Calu3 (cell line): ENCODE measurements at regions of chr3 and their contacts with region 1.

Region 1: GRCh38 chr3:124636101-124636862 is 94.0 kb upstream of the UMPS start:
- DNase-seq: no peak
- H3K4me3 Mint-ChIP-seq: no peak overlapping the region
- H3K27ac Mint-ChIP-seq: no peak overlapping the region
- H3K4me1 Mint-ChIP-seq: peaks cover 53% of the 10 kb centered on the region
- H3K27me3 Mint-ChIP-seq: no peaks in the 10 kb centered on the region
- CTCF ChIP-seq: no peak

Region 2: DNA sequence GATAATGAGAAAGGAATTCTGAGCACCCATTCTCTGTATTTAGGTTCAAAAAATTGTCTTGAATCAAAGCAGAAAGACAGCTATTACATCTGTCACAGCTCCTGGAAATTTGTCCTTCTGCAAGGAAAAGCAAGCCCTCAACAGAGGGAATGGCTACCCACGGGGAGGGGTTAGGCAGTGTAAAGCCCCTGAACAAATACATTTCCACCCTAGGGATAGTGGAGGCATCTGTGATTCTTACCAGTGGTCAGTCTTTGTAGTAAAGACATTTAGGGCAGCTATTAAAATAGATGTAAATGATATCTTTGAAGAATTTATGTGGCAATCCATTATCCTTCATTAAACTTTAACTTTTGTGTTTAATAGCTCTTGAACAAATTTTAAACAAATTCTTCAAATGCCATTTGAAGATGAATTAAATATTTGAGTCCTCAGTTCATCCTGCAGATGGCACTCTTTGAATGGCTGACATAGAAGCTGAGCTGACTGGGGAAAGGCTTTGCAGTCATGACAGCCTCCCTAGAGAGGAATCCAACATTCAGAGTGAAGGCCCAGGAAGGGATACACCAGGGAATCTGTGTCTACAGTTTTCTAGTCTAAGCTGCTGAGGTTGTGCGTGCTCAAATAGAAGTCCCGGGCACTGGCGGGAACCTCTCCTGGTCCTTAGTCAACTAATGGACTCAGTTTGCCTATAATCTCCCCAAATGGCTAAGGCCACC is 284.7 kb before region 1 on chr3:
- CTCF ChIA-PET with region 1: no interaction called
- intact Hi-C with region 1: no loop called
- DNase-seq: peak; percentile 22
- H3K4me3 Mint-ChIP-seq: no peak overlapping the region
- H3K27ac Mint-ChIP-seq: no peak overlapping the region
- H3K4me1 Mint-ChIP-seq: no peaks in the 10 kb centered on the region
- H3K27me3 Mint-ChIP-seq: peaks cover 66% of the 10 kb centered on the region
- CTCF ChIP-seq: peak; percentile 13

Region 3: DNA sequence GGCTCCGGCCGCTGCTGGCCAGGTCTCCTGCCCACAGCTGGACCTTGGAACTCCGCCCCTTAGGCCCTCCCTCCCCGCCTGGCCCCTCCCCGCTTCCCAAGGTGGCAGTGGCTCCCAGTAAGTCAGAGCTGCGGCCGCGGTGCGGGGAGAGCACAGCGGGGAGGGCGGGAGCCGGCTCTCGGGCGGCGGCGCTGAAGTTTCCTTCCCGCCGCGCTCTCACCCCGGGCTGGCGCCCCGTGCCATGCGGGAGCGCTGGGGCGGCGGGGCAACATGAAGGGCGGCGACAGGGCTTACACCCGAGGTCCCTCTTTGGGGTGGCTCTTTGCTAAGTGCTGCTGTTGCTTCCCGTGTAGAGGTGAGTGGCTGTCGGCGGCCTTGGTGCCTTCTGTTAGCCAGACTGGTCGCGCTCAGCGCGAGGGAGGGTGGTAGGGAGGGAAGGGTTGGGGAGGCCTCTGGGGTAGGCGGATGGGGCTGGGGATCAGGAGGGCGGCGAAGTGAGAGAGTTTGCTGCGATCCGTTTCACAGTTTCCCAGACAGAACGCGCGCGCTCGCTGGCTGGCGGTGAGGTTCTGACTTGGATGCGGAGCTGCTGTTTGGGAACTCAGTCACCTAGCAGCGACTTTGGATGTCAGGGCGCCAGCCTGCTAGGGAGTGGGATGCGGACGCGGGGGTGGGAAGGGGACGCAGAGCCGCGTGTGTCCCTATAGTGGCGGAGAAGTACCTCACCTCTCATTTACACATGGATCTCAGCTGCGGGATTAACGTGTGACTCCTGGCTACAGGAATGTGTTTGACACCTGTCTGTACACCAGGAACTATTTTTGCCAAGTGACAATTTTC is 51.5 kb before region 1 on chr3:
- CTCF ChIA-PET with region 1: interaction called, 3 read pairs
- intact Hi-C with region 1: loop called (anchors 2 kb)
- DNase-seq: peak; percentile 88
- H3K4me3 Mint-ChIP-seq: peak overlapping the region; percentile 82
- H3K27ac Mint-ChIP-seq: no peak overlapping the region
- H3K4me1 Mint-ChIP-seq: peaks cover 59% of the 10 kb centered on the region
- H3K27me3 Mint-ChIP-seq: no peaks in the 10 kb centered on the region
- CTCF ChIP-seq: no peak

Region 4: DNA sequence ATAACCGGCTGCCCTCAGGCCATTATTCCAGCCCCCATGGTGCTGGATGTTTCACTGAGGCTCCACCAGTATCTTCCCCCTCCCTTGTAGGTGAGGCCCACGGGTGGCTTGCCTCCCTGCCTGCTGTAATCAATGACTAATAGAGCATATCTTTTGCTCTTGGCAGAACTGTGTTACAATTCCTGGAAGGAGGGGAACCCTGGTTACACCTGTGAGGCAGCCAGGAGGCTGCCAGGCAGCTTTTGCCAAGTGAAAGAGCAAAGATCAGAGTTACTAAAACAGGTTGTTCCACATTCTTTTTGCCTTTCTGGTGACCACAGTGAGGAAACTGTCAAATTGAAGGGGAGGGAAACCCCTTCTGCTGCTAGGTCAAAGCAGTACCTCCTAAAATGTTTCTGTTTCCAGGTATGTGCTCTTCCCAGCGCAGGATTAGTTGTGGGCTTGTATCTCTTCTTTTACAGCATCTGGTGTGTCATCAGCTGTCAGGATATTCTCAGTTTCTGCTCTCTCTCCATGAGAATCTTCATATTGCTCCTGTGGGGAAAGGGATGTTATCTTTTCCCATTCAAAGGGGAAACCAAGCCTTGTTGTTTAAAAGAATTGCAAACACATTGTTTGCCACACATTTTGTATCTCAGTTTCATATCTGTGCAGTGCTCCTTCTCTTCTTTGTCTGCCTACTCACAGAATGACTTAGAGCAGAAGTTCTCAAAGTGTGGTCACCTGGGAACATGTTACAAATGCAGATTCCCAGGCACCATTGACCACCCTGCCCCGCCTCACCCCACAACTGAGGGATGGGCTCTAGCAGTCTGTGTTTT is 43.5 kb before region 1 on chr3:
- CTCF ChIA-PET with region 1: no interaction called
- intact Hi-C with region 1: loop called (anchors 2 kb)
- DNase-seq: peak; percentile 86
- H3K4me3 Mint-ChIP-seq: peak overlapping the region; percentile 60
- H3K27ac Mint-ChIP-seq: peak overlapping the region; percentile 52
- H3K4me1 Mint-ChIP-seq: peaks cover 48% of the 10 kb centered on the region
- H3K27me3 Mint-ChIP-seq: no peaks in the 10 kb centered on the region
- CTCF ChIP-seq: no peak

Region 5: DNA sequence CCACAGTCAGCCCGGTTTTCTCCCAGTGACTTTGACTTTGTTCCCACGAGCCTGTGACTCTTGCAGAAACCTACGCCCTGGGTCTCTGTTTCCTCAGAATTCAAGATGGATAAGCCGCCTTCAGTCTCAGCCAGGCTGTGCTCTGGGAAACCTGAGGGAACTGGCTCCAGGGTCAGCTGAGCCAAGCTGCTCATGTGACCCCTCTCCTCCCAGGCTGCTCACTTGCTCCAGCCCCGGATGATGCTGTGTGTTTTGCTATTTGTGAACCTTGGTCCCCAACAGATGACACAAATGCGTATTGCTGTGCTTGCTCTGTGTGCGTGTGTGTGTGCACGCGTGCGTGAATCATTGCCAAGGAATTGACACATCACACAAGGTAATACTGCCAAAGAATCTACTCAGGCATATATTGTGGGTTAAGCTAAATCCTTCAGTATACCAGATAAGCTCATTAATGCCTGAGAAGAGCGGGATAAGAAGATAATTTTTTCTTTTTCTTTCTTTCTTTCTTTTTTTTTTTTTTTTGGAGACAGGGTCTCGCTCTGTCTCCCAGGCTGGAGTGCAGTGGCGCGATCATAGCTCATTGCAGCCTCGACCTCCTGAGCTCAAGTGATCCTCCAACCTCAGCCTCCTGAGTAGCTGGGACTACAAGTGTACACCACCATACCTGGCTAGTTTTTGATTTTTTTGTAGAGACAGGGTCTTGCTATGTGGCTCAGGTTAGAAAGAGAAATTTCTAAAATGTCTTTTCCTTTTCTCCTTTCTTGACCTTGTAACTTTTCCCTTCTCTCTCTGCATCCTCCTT is 64.8 kb after region 1 on chr3:
- CTCF ChIA-PET with region 1: no interaction called
- intact Hi-C with region 1: no loop called
- DNase-seq: no peak
- H3K4me3 Mint-ChIP-seq: no peak overlapping the region
- H3K27ac Mint-ChIP-seq: no peak overlapping the region
- H3K4me1 Mint-ChIP-seq: no peaks in the 10 kb centered on the region
- H3K27me3 Mint-ChIP-seq: peaks cover 79% of the 10 kb centered on the region
- CTCF ChIP-seq: no peak